ENCODE measurements at regions of chr1 and their contacts with region 1.

Region 1: GRCh38 chr1:153990468-153991150 is at the start of gene RPS27:
- DNase-seq: peak; percentile 81 to 93
- H3K4me3 ChIP-seq: peak within 1 kb of the TSS; percentile 92
- H3K27ac ChIP-seq: peak within 1 kb of the TSS; percentile 77
- H3K4me1 ChIP-seq: peaks cover 14% of the 10 kb centered on the region
- H3K27me3 ChIP-seq: no peaks in the 10 kb centered on the region
- CTCF ChIP-seq: no peak
- total RNA-seq, gene RPS27: 898 and 1,409 TPM in 2 replicates

Region 2: GRCh38 chr1:153510984-153511410 is 479.6 kb before region 1 on chr1:
- CTCF ChIA-PET with region 1: no interaction called
- POLR2A ChIA-PET with region 1: no interaction called
- intact Hi-C with region 1: loop called (anchors 5 kb)
- DNase-seq: peak; percentile 52 to 82
- H3K4me3 ChIP-seq: no peak overlapping the region
- H3K27ac ChIP-seq: no peak overlapping the region
- H3K4me1 ChIP-seq: peaks cover 51% of the 10 kb centered on the region
- H3K27me3 ChIP-seq: no peaks in the 10 kb centered on the region
- CTCF ChIP-seq: peak; percentile 96

Region 3: GRCh38 chr1:153677718-153678505 is 312.7 kb before region 1 on chr1:
- CTCF ChIA-PET with region 1: interaction called, 7 read pairs
- POLR2A ChIA-PET with region 1: interaction called, 27 read pairs
- intact Hi-C with region 1: loop called (anchors 5 kb)
- DNase-seq: peak in 1 of 2 experiments; percentile 38
- H3K4me3 ChIP-seq: peak overlapping the region; percentile 39; the same call in 1 of the 2 replicates
- H3K27ac ChIP-seq: no peak overlapping the region
- H3K4me1 ChIP-seq: no peaks in the 10 kb centered on the region
- H3K27me3 ChIP-seq: peaks cover 9% of the 10 kb centered on the region; the same call in 1 of the 2 replicates
- CTCF ChIP-seq: peak; percentile 94

Region 4: DNA sequence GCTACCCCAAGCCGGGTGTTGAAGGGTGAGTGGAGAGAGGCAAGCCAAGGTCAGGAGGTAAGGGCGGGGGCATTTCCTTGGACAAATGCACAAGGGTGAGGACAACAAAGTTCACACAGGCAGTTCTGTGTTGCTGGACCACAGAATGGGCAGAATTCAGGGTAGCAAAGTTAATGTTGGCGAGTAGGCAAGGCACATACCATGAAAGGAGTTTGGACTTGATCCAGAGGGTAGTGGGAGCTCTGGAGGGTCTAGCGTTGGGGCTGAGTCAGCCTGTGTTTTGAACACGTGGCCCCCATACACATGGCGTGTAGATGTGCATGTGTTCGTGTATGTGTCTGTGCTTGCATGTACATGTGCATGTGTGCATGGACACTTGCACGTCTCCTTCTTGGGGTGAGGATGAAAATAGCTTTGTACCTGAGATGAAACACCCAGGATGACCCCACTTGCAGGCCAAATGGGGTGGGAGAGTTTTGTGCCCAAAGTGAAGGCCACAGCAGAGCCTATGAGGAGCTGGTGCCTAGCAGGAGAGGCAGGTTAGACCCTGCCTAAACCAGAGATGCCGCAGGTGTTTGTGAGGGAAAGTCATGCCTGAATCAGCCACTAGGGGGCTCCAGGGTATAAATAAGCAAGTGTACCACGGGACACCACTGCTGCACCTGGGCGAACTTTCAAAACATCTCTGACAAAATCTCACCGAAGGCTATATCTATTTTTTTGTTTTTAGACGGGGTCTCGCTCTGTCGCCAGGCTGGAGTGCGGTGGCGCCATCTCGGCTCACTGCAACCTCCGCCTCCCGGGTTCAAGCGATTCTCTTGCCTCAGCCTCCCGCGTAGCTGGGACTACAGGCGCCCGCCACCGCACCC is 193.6 kb before region 1 on chr1:
- CTCF ChIA-PET with region 1: interaction called, 4 read pairs
- POLR2A ChIA-PET with region 1: no interaction called
- intact Hi-C with region 1: loop called (anchors 1 kb)
- DNase-seq: peak; percentile 48 to 73
- H3K4me3 ChIP-seq: no peak overlapping the region
- H3K27ac ChIP-seq: no peak overlapping the region
- H3K4me1 ChIP-seq: no peaks in the 10 kb centered on the region; the same call in 1 of the 2 replicates
- H3K27me3 ChIP-seq: no peaks in the 10 kb centered on the region
- CTCF ChIP-seq: peak; percentile 93

Region 5: GRCh38 chr1:153936011-153936802 is 54.4 kb before region 1 on chr1:
- CTCF ChIA-PET with region 1: no interaction called
- POLR2A ChIA-PET with region 1: no interaction called
- intact Hi-C with region 1: no loop called
- DNase-seq: no peak
- H3K4me3 ChIP-seq: no peak overlapping the region
- H3K27ac ChIP-seq: no peak overlapping the region
- H3K4me1 ChIP-seq: no peaks in the 10 kb centered on the region
- H3K27me3 ChIP-seq: no peaks in the 10 kb centered on the region
- CTCF ChIP-seq: no peak

Region 6: GRCh38 chr1:153946622-153947241 is 43.9 kb before region 1 on chr1 and contains the start of gene DENND4B:
- CTCF ChIA-PET with region 1: interaction called, 3 read pairs
- POLR2A ChIA-PET with region 1: interaction called, 4 read pairs
- intact Hi-C with region 1: loop called (anchors 1 kb)
- DNase-seq: peak; percentile 59 to 79
- H3K4me3 ChIP-seq: peak within 1 kb of the TSS; percentile 85
- H3K27ac ChIP-seq: no peak within 1 kb of the TSS
- H3K4me1 ChIP-seq: peaks cover 10% of the 10 kb centered on the region; the same call in 1 of the 2 replicates
- H3K27me3 ChIP-seq: no peaks in the 10 kb centered on the region
- CTCF ChIP-seq: peak; percentile 88
- total RNA-seq, gene DENND4B: 41.3 and 52.7 TPM in 2 replicates

Region 7: GRCh38 chr1:154019269-154019668 is 28.7 kb after region 1 on chr1:
- CTCF ChIA-PET with region 1: no interaction called
- POLR2A ChIA-PET with region 1: no interaction called
- intact Hi-C with region 1: no loop called
- DNase-seq: no peak
- H3K4me3 ChIP-seq: no peak overlapping the region
- H3K27ac ChIP-seq: no peak overlapping the region
- H3K4me1 ChIP-seq: no peaks in the 10 kb centered on the region
- H3K27me3 ChIP-seq: no peaks in the 10 kb centered on the region
- CTCF ChIP-seq: no peak

Region 8: DNA sequence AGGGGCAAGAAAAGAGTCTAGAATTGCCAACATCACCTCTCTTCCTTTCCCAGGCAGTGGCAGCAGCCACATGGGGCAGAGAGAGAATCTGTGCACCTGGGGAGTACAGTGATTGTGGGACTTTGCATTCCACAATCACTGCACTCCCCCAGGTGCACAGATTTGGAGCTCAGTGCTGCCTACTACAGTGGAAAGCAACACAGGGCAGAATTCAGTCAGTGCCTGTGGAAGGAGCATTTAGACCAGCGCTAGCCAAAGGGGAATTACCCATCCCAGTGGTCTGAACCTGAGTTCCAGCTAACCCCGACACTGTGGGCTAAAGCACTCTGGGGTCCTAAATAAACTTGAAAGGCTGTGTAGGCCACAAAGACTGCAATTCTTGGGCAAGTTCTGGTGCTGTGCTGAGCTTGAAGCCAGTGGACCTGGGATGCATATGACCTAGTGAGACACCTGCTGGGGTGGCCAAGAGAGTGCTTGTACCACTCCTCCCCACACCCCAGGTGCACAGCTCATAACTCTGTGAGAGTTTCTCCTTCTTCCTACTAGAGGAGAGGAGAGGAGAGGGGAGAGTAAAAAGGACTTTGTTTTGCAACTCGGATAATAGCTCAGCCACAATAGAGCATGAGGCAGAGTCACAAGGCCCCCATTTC is 113.9 kb after region 1 on chr1:
- CTCF ChIA-PET with region 1: interaction called, 3 read pairs
- POLR2A ChIA-PET with region 1: no interaction called
- intact Hi-C with region 1: loop called (anchors 10 kb)
- DNase-seq: no peak
- H3K4me3 ChIP-seq: no peak overlapping the region
- H3K27ac ChIP-seq: no peak overlapping the region
- H3K4me1 ChIP-seq: no peaks in the 10 kb centered on the region
- H3K27me3 ChIP-seq: no peaks in the 10 kb centered on the region
- CTCF ChIP-seq: no peak

Measured in PC-9 (cell line).